Left cardiac atrium (tissue), 4 donors: ENCODE measurements at regions of chr13 and their contacts with region 1.

Region 1: DNA sequence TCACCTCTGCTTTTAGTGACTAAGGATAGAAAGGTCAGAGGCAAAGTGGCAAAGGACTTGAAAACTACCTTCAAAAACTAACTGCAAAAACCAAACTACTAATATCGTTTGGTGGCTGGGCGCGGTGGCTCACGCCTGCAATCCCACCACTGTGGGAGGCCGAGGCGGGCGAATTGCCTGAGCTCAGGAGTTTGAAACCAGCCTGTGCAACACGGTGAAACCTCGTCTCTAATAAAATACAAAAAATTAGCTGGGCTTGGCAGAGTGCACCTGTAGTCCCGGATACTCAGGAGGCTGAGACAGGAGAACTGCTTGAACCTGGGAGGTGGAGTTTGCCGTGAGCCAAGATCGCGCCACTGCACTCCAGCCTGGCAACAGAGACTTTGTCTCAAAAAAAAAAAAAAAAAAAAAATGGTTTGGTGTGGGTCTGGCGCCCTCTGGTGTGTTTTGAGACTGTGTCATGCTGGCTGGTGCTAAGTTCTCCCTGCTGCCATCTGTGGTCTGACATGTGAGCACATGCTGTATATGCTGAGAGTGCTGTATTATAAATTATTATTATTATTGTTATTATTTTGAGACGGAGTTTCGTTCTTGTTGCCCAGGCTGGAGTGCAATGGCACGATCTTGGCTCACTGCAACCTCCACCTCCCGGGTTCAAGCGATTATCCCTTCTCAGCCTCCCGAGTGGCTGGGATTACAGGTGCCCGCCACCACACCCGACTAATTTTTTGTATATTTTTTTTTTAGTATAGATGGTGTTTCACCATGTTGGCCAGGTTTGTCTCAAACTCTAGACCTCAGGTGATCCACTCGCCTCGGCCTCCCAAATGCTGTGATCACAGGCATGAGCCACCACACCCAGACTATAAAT is 36.0 kb upstream of the RNF17 start:
- DNase-seq: peak; percentile 66
- ATAC-seq: peak; percentile 94 to 95

Region 2: GRCh38 chr13:24693862-24694471 is 34.0 kb before region 1 on chr13:
- intact Hi-C with region 1: loop called (anchors 5 kb)
- DNase-seq: peak; percentile 34
- ATAC-seq: peak; percentile 52 to 59